Dorsolateral prefrontal cortex (tissue), 120 donors: ENCODE measurements at regions of chr3 and their contacts with region 1.

Region 1: GRCh38 chr3:16177962-16178627 is 3.6 kb downstream of the GALNT15 start:
- DNase-seq: peak; percentile 79 to 92 (median 88)
- H3K4me3 ChIP-seq: peak overlapping the region; percentile 36 to 75 (median 57)
- H3K27ac ChIP-seq: peak overlapping the region in 53 of 59 donors; percentile 0 to 97 (median 72)
- H3K27me3 ChIP-seq: no peaks in the 10 kb centered on the region
- CTCF ChIP-seq: peak; percentile 88 to 99 (median 98)

Region 2: DNA sequence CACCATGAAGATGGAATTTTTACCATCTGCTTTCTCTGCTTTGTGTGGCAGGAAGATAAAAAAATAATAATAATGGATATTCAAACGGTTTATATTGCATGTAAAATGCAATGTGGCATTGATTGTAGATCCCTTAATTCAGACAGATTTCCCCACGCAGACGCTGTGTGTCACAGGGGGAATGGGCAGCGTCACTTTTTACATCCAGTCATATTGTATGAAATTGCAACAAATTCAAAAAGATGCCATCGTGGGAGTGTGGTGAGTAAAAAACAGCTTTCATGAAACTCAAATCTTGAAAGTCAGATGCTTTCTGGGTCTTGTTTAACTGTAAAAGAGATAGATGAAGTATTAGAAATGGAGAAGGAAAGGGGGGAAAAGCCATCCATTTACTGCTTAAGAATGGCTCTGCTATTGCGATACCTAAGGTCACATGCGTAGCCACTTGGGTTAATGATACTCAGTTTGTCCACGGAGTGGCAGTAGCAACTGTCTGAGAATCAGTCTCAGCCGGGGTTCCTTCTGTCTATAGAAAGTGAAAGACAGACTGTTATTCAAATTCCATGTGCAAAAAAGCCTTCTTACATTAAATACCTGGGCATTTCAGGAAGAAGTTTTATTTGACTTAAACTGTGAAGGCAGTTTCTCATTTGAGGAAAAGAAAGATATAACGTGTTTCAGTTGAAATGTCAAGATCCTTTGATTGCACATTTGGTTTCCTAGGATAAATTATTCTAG is 548.1 kb before region 1 on chr3:
- intact Hi-C with region 1: loop called in 1 of 2 experiments (anchors 10 kb)
- DNase-seq: peak in 8 of 10 donors; percentile 40 to 84 (median 62)
- H3K4me3 ChIP-seq: peak overlapping the region in 58 of 59 donors; percentile 2 to 67 (median 47)
- H3K27ac ChIP-seq: peak overlapping the region in 56 of 59 donors; percentile 40 to 97 (median 82)
- H3K27me3 ChIP-seq: no peaks in the 10 kb centered on the region
- CTCF ChIP-seq: peak; percentile 67 to 96 (median 88)

Region 3: DNA sequence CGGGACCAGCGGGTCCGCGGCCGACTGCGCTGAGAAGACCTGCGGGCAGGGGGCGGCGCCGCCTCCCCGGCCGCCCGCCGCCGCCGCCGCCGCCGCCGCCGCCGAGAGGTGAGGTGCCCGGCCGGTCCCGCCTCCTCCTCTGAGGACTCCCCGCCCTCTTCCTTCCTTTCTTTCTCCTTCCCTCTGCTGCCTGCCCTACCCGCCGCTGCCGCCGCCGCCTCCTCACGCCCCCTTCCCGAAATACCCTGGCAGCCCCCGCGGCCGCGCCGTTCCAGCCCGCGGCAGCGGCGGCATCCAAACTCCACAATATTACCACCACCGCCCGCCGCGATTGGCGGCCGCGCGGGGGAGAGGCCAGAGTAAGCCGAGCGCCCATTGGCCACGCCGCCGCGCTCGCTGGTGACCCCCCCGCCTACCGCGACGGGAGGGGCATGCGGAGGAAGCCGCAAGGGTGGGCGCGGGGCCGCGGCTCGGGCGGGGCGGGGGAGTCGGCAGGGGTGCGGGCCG is 318.5 kb before region 1 on chr3:
- intact Hi-C with region 1: loop called in 1 of 2 experiments (anchors 5 kb)
- DNase-seq: peak; percentile 78 to 93 (median 88)
- H3K4me3 ChIP-seq: peak overlapping the region; percentile 64 to 100 (median 92)
- H3K27ac ChIP-seq: peak overlapping the region in 49 of 59 donors; percentile 34 to 91 (median 81)
- H3K27me3 ChIP-seq: no peaks in the 10 kb centered on the region
- CTCF ChIP-seq: peak in 11 of 56 donors; percentile 7 to 34 (median 18)

Region 4: DNA sequence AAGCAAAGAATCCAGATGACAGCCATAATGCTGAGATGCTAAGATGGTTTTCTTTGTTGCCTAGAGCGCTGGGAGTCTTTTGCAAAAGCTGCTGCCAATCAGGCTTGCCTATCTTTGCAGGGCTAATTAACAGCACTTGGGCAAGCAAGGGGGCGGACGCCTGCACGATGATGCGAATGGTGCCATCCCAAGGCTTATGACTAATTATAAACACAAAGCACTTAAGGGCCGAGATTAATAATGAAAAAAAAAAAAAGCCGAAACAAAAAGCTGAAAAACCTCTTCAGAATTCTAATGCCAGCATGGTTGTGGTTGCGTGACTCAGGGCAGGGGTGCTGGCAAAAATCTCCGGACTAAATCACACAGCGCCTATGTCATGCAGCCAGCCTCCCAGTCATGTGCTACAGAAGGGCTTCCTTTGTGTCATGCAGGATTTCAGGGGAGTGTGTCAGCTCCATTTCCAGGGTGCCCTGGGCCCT is 195.4 kb before region 1 on chr3:
- intact Hi-C with region 1: loop called in 1 of 2 experiments (anchors 5 kb)
- DNase-seq: peak in 9 of 10 donors; percentile 47 to 79 (median 59)
- H3K4me3 ChIP-seq: peak overlapping the region in 56 of 59 donors; percentile 9 to 64 (median 38)
- H3K27ac ChIP-seq: peak overlapping the region in 57 of 59 donors; percentile 11 to 87 (median 76)
- H3K27me3 ChIP-seq: no peaks in the 10 kb centered on the region
- CTCF ChIP-seq: peak in 3 of 56 donors; percentile 14 to 43 (median 18)

Region 5: GRCh38 chr3:16028604-16029003 is 149.5 kb before region 1 on chr3:
- intact Hi-C with region 1: no loop called
- DNase-seq: no peak
- H3K4me3 ChIP-seq: no peak overlapping the region
- H3K27ac ChIP-seq: no peak overlapping the region
- H3K27me3 ChIP-seq: no peaks in the 10 kb centered on the region
- CTCF ChIP-seq: no peak

Region 6: DNA sequence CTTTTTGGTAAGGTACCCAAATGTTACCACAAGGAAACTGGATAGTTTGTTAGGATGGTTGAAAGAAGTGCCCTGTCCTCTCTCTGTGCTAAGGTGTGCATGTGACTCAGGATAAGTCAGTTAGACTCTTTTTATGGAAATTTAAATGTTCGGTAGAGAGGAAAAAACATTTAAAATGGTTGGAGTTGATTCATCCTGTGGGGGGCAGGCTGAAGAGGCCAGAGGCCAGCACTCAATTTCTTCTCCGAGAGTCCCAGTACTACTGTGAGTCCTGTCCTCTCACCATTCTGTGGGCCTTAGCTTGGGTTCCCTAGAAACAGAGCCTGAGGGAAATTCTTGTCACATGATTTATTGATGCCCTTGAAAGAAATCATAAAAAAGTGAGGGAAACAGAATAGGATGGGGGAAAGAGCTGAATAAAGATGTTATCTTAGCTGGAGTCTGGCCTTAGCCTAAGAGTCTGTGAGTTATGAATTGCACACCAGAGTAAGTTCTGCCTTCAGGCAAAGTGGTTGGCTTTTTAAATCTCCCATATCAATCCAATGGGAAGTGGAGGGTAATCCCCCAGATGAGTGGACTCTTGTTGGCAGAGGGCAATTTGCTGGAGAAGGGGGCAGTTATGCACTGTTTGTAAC is 110.1 kb before region 1 on chr3:
- intact Hi-C with region 1: loop called (anchors 1 to 2 kb)
- DNase-seq: no peak
- H3K4me3 ChIP-seq: no peak overlapping the region
- H3K27ac ChIP-seq: no peak overlapping the region
- H3K27me3 ChIP-seq: no peaks in the 10 kb centered on the region
- CTCF ChIP-seq: no peak

Region 7: GRCh38 chr3:16130066-16130465 is 48.0 kb before region 1 on chr3:
- intact Hi-C with region 1: no loop called
- DNase-seq: no peak
- H3K4me3 ChIP-seq: no peak overlapping the region
- H3K27ac ChIP-seq: peak overlapping the region in 16 of 59 donors; percentile 5 to 64 (median 24)
- H3K27me3 ChIP-seq: no peaks in the 10 kb centered on the region
- CTCF ChIP-seq: no peak

Region 8: DNA sequence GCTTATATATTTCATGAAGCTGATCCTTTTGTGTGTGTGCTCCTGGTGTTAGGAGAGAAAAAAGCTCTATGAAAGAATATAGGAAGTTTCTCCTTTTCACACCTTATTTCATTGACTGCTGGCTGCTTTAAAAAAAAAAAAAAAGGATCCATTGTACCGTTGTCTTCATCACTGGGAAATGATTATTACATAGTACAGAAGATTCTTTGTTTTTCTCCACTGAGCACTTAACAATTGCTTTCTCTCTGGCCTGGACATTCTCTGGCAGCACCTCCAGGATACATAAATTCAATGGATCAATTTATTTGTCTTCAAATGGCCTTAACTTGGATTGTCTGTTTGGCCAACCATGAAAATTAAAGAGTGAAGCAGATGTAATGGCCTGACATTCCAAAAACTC is 49.5 kb after region 1 on chr3:
- intact Hi-C with region 1: loop called in 1 of 2 experiments (anchors 5 kb)
- DNase-seq: no peak
- H3K4me3 ChIP-seq: no peak overlapping the region
- H3K27ac ChIP-seq: peak overlapping the region in 35 of 59 donors; percentile 6 to 87 (median 67)
- H3K27me3 ChIP-seq: no peaks in the 10 kb centered on the region
- CTCF ChIP-seq: no peak